ENCODE measurements at regions of chr1 and their contacts with region 1.

Region 1: DNA sequence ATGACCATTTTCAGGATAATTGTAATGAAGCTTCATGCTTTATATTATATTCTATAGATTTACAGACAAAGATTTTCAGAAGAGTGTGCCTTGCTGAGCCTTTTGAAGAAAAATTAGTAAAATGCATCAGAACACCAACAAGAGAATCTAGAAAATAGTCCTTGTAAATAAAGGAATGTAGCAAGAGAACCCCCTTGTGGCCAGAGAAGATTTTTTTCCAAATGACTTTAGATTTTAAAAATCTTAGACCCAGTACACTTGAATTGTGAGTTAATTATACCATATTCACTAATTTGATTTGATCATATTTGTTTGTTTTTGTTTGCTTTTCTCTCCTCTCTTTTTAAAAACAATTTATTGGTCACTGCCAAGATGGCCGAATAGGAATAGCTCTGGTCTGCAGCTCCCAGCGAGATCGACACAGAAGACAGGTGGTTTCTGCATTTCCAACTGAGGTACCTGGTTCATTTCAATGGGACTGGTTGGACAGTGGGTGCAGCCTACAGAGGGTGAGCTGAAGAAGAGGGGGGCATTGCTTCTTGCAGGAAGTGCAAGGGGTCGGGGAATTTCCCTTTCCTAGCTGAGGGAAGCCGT is 12.8 kb upstream of the IFI44L start:
- DNase-seq: no peak
- H3K4me3 ChIP-seq: no peak overlapping the region
- H3K27ac ChIP-seq: no peak overlapping the region
- H3K4me1 ChIP-seq: peaks cover 0 to 13% (median 4%) of the 10 kb centered on the region in 4 donors
- H3K27me3 ChIP-seq: peaks cover 0 to 7% (median 0%) of the 10 kb centered on the region in 4 donors
- CTCF ChIP-seq: peak; percentile 43 to 67 (median 64)
- EP300 ChIP-seq: no peak
- POLR2A ChIP-seq: no peak

Region 2: GRCh38 chr1:78145105-78145580 is 462.3 kb before region 1 on chr1:
- intact Hi-C with region 1: loop called (anchors 2 kb)
- DNase-seq: no peak
- H3K4me3 ChIP-seq: no peak overlapping the region
- H3K27ac ChIP-seq: no peak overlapping the region
- H3K4me1 ChIP-seq: peaks cover 0 to 7% (median 0%) of the 10 kb centered on the region in 4 donors
- H3K27me3 ChIP-seq: no peaks in the 10 kb centered on the region
- CTCF ChIP-seq: peak; percentile 79 to 83 (median 82)
- EP300 ChIP-seq: no peak
- POLR2A ChIP-seq: no peak